OCI-LY7 (cell line): ENCODE measurements at regions of chr10 and their contacts with region 1.

Region 1: DNA sequence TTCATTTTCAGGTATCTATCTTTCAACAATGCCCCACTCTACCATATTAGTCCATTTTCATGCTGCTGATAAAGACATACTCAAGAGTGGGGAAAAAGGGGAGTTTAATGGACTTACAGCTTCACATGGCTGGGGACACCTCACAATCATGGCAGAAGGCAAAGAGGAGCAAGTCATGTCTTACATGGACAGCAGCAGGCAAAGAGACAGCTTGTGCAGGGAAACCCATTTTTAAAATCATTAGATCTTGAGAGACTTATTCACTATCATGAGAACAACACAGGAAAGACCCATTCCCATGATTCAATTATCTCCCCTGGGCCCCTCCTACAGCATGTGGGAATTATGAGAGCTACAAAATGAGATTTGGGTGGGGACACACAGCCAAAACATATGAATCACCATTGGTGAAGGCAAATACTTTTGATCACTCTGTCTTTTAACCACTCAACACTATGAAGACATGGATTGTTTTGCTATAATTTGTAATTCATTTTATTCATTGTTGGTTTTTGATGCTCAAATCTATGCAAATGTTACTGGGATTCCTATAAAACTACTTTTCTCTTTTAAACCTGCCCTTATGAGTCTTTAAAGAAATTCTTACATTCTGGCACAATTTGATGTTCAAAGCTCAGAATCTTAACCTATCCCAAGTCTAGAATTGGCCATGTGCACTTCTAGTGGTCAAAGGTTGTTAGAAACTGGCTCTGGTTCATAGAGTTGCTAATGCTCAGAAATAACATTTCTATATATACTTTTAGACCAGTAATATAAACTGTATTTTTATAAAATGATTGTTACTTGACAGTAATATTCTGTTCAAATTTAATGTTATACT is 15.3 kb downstream of the AKR1C4 start:
- DNase-seq: no peak
- H3K4me3 ChIP-seq: no peak overlapping the region
- H3K27ac ChIP-seq: no peak overlapping the region
- H3K4me1 ChIP-seq: no peaks in the 10 kb centered on the region
- CTCF ChIP-seq: no peak

Region 2: GRCh38 chr10:5234106-5234860 is 22.4 kb after region 1 on chr10:
- CTCF ChIA-PET with region 1: no interaction called
- POLR2A ChIA-PET with region 1: no interaction called
- intact Hi-C with region 1: no loop called
- DNase-seq: no peak
- H3K4me3 ChIP-seq: no peak overlapping the region
- H3K27ac ChIP-seq: no peak overlapping the region
- H3K4me1 ChIP-seq: no peaks in the 10 kb centered on the region
- CTCF ChIP-seq: no peak

Region 3: DNA sequence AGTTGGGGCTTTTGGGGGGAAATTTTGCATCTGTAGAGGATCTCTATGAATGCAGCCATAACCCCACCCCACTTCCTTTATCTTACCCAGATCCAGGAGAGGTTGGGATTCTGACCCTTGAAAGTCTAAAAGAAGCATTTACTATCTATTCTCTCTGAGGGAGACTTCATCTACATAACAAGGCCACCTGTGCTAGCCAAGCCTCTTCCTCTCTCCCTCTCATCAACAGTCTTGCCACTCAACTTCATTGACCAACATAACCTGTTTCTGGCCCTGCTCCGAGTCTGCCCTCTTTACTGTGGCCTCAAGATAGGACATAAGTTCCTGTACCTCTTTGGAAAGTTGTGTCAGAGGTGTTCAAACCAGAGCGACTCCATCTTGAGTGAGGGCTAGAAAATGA is 173.3 kb after region 1 on chr10:
- CTCF ChIA-PET with region 1: no interaction called
- POLR2A ChIA-PET with region 1: no interaction called
- intact Hi-C with region 1: loop called (anchors 5 kb)
- DNase-seq: no peak
- H3K4me3 ChIP-seq: no peak overlapping the region
- H3K27ac ChIP-seq: no peak overlapping the region
- H3K4me1 ChIP-seq: no peaks in the 10 kb centered on the region
- CTCF ChIP-seq: no peak